ENCODE measurements at regions of chr3 and their contacts with region 1.

Region 1: GRCh38 chr3:13495921-13496723 is 16.0 kb downstream of the HDAC11 start:
- DNase-seq: peak; percentile 76
- H3K4me3 ChIP-seq: no peak overlapping the region
- H3K27ac ChIP-seq: no peak overlapping the region
- H3K4me1 ChIP-seq: no peaks in the 10 kb centered on the region
- CTCF ChIP-seq: peak; percentile 89

Region 2: GRCh38 chr3:13073326-13074005 is 422.7 kb before region 1 on chr3 and contains the start of gene IQSEC1:
- CTCF ChIA-PET with region 1: no interaction called
- POLR2A ChIA-PET with region 1: no interaction called
- intact Hi-C with region 1: no loop called
- DNase-seq: peak; percentile 93
- H3K4me3 ChIP-seq: peak within 1 kb of the TSS; percentile 77
- H3K27ac ChIP-seq: peak within 1 kb of the TSS; percentile 78
- H3K4me1 ChIP-seq: peaks cover 87% of the 10 kb centered on the region
- CTCF ChIP-seq: peak; percentile 38; the same call in 1 of the 2 replicates
- total RNA-seq, gene IQSEC1: 24.3 and 25.2 TPM in 2 replicates

Region 3: DNA sequence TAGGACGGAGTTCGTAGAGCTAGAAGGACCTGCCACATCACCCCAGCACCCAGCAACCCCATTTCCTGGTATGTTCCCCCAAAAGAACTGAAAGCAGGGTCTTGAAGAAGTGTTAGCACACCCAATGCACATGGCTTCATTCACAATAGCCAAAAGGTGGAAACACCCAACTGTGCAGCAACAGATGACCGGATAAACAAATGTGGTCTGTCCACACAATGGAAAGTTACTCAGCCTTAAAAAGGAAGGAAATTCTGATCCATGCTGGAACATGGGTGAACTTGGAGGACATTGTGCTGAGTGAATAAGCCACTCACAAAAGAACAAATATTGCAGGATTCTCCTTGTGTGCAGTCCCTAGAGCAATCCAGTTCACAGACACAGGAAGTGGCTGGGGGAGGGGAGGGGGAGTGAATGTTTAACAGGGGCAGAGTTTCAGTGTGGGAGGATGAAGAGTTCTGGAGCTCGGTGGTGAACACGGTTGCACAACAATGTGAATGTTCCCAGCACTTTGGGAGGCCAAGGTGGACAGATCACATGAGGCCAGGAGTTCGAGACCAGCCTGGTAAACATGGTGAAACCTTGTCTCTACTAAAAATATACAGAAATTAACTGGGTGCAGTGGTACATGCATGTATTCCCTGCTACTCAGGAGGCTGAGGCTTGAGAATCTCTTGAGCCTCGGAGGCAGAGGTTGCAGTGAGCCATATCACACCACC is 233.5 kb before region 1 on chr3:
- CTCF ChIA-PET with region 1: no interaction called
- POLR2A ChIA-PET with region 1: no interaction called
- intact Hi-C with region 1: no loop called
- DNase-seq: peak; percentile 57
- H3K4me3 ChIP-seq: peak overlapping the region; percentile 4
- H3K27ac ChIP-seq: peak overlapping the region; percentile 13
- H3K4me1 ChIP-seq: peaks cover 17% of the 10 kb centered on the region
- CTCF ChIP-seq: no peak

Region 4: GRCh38 chr3:13612829-13613228 is 116.7 kb after region 1 on chr3:
- CTCF ChIA-PET with region 1: no interaction called
- POLR2A ChIA-PET with region 1: no interaction called
- intact Hi-C with region 1: no loop called
- DNase-seq: no peak
- H3K4me3 ChIP-seq: no peak overlapping the region
- H3K27ac ChIP-seq: no peak overlapping the region
- H3K4me1 ChIP-seq: no peaks in the 10 kb centered on the region
- CTCF ChIP-seq: no peak

Region 5: DNA sequence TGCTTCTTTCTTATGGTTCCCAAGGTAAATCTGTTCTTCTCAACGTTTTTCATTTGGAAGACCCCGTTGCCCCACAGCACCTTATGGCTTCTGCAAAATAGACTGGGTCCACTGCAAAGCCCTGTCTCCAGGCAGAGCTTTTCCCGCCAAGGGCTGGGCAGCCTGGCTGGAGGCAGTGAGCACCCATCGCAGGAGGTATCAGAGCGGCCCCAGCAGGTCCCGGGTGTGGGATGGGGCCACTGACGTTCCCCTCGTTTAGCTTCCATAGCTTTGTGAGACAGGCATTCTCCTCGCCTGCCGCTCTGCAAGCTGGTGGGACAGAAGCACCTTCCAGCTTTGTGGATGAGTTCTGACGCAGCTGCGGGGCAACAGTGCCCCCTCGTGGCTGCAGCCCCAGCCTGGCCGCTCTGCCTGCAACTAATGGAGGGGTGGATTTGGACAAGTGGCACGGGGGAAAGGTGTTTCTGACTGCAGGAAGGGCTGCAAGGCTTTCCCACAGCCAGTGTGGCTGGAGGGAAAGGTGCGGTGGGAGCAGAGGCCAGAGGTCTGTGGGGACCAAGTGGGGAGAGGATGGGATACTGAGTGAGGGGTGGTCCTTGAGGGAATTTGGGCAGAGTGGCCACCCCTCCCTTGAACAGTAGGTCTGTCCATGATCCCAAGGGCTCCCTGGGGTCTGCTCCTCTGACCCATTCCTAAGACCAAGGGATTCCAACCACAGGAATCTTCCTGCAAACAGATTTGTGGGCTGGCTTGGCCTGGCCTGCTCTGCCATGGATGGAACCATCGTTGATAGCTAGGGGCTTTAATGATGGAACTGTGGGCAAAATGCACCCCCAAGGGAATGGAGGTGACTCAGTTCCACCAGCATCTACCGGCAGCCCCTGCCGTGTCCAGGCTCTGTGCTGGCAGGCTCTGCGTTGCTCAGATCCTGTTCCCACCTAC is 152.2 kb after region 1 on chr3:
- CTCF ChIA-PET with region 1: interaction called, 5 read pairs
- POLR2A ChIA-PET with region 1: no interaction called
- intact Hi-C with region 1: loop called (anchors 1 kb)
- DNase-seq: peak; percentile 73
- H3K4me3 ChIP-seq: no peak overlapping the region
- H3K27ac ChIP-seq: no peak overlapping the region
- H3K4me1 ChIP-seq: no peaks in the 10 kb centered on the region
- CTCF ChIP-seq: peak; percentile 95